ENCODE measurements at regions of chr11 and their contacts with region 1.

Region 1: DNA sequence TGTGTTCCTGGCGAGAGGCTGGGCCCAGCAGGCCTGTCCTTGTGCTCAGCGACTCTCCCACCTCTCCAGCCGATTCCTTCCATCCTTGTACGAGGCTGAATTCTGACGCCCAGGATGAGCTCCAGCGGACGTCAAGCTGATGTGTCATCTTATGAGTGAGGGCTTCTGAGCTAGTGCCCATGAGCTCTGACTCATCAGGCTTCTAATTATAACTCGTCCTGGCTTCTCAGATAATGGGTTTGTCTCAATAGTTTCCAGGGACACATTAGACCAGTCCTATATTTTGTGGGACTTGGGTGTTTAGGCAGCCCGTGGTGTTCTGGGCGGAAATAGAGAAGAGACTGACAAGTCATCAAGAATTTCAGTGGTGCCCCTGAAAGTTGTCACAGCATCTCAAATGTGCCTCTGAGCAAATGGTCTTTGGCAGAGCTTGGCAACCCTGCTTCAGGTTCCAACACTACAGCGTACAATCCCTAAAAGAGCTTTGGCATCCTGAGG is 108.2 kb upstream of the CD44 start:
- DNase-seq: peak; percentile 62
- H3K4me3 Mint-ChIP-seq: peak overlapping the region; percentile 69
- H3K27ac Mint-ChIP-seq: peak overlapping the region; percentile 95
- H3K4me1 Mint-ChIP-seq: peaks cover 68% of the 10 kb centered on the region
- H3K27me3 Mint-ChIP-seq: peaks cover 5% of the 10 kb centered on the region

Region 2: DNA sequence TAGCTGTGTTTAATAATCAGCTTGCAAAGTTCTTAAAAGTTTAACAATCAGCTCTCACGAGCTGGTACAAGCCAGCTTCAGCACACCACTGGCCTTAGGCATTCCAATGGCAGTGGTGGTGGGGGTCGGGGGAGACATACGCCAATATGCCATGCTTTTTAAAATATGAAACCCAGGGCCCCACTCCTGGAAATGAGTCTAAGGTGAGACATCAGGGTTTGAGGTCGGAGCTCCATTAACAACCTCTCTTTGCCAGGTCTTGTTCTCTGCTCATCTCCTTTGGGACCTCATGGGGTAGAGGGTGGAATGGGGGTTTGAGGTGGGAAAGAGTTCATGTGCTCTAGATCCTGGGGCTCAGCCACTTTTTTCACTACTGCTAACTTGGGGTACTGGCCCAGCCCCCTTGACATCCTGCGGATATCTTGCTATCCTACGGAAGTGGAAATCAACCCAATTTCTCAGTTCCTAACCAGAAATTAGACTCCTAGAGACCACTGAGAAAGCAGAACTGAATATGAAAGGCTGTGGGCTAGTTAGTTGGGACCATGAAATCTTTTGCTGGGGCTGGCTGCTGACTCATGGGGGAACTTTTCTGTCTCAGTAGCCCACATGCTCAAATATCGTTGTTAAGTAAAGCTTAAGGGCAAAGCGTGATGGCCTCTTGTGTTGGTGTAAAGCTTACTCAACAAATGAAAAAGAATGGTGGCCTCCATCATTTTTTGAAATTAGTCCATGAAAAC is 24.2 kb before region 1 on chr11:
- CTCF ChIA-PET with region 1: interaction called, 4 read pairs
- POLR2A ChIA-PET with region 1: interaction called, 27 read pairs
- DNase-seq: peak; percentile 45
- H3K4me3 Mint-ChIP-seq: no peak overlapping the region
- H3K27ac Mint-ChIP-seq: peak overlapping the region; percentile 67
- H3K4me1 Mint-ChIP-seq: peaks cover 49% of the 10 kb centered on the region
- H3K27me3 Mint-ChIP-seq: peaks cover 11% of the 10 kb centered on the region

Region 3: DNA sequence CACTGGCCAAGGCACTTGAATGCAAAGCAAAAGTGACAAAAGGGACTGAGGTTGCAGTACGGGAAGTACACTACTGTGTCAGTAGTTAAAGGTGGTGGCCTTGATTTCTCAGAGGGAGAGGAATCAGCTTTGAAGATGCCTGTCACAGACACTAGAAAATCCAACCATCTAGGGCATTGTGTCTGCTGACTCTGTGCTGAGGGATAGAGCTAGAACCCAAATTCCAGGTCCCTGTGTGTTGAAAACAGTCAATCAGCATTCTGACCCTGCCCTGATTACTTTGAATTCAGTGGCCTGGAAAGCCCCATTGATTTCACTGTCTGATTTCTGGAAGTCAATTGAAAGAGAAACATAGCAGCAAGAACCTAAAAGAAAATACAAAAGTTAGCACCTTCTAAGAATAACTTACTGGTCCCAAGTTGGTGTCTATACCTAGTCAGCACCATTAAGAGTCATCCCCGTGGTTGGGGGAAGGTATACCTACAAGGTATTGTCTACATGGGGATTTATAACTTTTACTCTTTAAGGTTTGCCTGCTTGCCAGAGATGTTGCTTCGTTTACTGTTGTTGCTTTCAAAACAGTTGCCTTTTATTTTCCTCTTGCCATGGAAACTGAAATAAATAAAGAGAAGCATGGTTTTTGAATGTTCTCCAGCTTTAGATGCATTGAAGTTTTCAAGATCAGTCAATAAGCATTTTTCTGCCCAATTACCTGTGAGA is 17.1 kb before region 1 on chr11:
- CTCF ChIA-PET with region 1: interaction called, 7 read pairs
- POLR2A ChIA-PET with region 1: interaction called, 27 read pairs
- DNase-seq: peak; percentile 28
- H3K4me3 Mint-ChIP-seq: peak overlapping the region; percentile 59
- H3K27ac Mint-ChIP-seq: peak overlapping the region; percentile 84
- H3K4me1 Mint-ChIP-seq: peaks cover 38% of the 10 kb centered on the region
- H3K27me3 Mint-ChIP-seq: peaks cover 6% of the 10 kb centered on the region

Region 4: DNA sequence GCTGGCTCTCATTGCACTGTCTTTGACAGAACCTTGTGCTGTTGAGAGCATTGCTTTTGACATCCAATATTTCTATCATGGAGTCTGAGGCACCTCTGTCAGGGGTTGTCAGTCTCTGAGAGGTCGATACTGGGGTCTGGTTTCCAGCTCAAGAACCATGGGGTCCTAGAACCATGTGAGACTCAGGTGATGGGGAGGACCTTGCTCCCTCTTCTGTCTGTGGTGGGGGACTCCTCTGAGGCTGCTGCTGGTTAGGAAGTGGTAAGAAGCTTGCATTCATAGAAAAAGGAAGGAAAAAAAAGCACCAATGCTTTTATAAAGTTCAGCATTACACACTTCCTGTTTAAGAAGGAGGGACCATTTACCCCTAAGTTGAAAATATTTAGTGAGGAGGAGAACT is 16.4 kb after region 1 on chr11:
- CTCF ChIA-PET with region 1: interaction called, 18 read pairs
- POLR2A ChIA-PET with region 1: interaction called, 41 read pairs
- DNase-seq: peak; percentile 63
- H3K4me3 Mint-ChIP-seq: no peak overlapping the region
- H3K27ac Mint-ChIP-seq: peak overlapping the region; percentile 74
- H3K4me1 Mint-ChIP-seq: peaks cover 74% of the 10 kb centered on the region
- H3K27me3 Mint-ChIP-seq: peaks cover 4% of the 10 kb centered on the region